ENCODE measurements at regions of chr13 and their contacts with region 1.

Region 1: DNA sequence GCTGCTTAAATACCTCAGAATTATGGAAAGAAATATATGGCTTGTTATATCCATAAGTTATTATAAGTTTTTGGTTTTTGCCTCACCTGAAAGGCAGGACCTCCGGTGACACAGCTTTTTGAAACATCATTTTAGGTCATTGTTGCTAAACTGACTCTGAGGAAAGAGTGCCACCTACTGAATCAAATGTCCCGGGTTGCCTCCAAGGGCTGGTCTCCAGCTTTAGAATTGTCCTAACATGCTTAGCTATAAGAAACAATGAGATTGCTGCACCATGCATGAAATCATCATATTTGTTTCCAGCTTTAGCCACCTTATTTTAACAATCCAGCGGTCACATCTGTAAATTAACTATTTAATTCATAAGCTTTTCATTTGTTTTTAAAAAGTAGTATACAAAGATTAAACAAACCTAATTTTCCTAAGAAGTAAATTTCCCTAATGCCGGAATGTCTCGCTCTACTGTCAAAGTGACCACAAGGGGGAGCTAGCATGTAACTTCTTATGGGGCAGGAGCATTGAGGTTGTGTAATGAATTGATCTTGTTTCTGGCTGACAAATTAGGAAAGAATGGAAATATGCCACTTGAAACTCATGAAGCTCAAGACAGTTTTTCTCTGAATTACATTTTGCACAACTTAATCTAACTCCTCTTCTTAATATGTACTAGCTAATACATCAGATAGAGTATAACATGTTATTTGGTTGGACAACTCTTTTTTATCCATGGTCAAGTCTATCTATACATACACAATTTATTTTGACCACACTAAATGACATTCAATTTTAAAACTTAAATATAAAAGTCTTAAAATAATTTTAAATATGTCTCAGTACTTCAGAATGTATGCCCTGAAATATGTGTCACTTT is 6.7 kb upstream of the PCDH17 start:
- H3K4me3 ChIP-seq: no peak overlapping the region
- H3K27ac ChIP-seq: no peak overlapping the region
- H3K4me1 ChIP-seq: no peaks in the 10 kb centered on the region
- CTCF ChIP-seq: no peak

Region 2: GRCh38 chr13:57582032-57582431 is 42.8 kb before region 1 on chr13:
- CTCF ChIA-PET with region 1: interaction called, 10 read pairs
- POLR2A ChIA-PET with region 1: no interaction called
- H3K4me3 ChIP-seq: no peak overlapping the region
- H3K27ac ChIP-seq: no peak overlapping the region
- H3K4me1 ChIP-seq: no peaks in the 10 kb centered on the region
- CTCF ChIP-seq: no peak

Region 3: GRCh38 chr13:57595775-57596174 is 29.0 kb before region 1 on chr13:
- CTCF ChIA-PET with region 1: no interaction called
- POLR2A ChIA-PET with region 1: no interaction called
- H3K4me3 ChIP-seq: no peak overlapping the region
- H3K27ac ChIP-seq: no peak overlapping the region
- H3K4me1 ChIP-seq: no peaks in the 10 kb centered on the region
- CTCF ChIP-seq: no peak

Region 4: DNA sequence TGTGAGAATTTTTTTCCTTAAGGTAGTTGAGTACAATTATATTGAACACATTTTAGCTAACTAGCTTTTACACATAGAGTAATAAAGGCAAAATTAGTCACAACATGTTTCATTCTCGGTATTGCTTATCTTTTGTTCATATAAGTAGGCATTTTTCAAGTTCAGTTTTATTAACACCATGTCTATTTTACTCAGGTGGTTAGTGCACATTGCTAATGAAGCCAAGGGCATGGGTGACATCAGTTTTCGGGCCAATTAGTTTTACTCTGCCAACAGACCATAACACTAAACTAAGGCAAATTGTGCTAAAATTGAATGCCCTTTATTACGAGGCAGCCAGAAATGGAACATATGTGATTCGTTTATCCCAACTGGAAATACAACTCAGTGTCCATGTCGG is 12.8 kb before region 1 on chr13:
- CTCF ChIA-PET with region 1: interaction called, 15 read pairs
- POLR2A ChIA-PET with region 1: interaction called, 3 read pairs
- H3K4me3 ChIP-seq: no peak overlapping the region
- H3K27ac ChIP-seq: no peak overlapping the region
- H3K4me1 ChIP-seq: no peaks in the 10 kb centered on the region
- CTCF ChIP-seq: no peak

Region 5: DNA sequence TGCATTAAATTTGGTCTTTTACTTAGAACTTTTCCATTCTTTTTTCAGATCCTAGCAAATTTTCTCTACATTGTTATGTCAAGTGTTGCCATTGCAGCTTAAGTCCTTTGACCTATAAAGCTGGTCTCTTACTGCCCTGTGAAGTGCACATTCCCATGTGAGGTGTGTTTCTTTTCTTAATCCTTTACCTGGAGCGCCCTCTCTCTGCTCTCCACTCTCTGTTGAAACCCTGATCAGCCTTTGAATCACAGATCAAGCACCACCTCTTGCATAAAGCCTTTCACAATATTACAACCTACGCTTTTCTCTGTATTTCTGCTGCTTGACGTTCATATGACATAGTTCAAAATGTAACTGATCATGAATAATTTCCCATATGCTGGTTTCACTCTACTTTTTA is 91.5 kb after region 1 on chr13:
- CTCF ChIA-PET with region 1: interaction called, 10 read pairs
- POLR2A ChIA-PET with region 1: no interaction called
- H3K4me3 ChIP-seq: no peak overlapping the region
- H3K27ac ChIP-seq: no peak overlapping the region
- H3K4me1 ChIP-seq: no peaks in the 10 kb centered on the region
- CTCF ChIP-seq: no peak

Region 6: GRCh38 chr13:57857945-57858344 is 233.1 kb after region 1 on chr13:
- CTCF ChIA-PET with region 1: interaction called, 10 read pairs
- POLR2A ChIA-PET with region 1: no interaction called
- H3K4me3 ChIP-seq: no peak overlapping the region
- H3K27ac ChIP-seq: no peak overlapping the region
- H3K4me1 ChIP-seq: no peaks in the 10 kb centered on the region
- CTCF ChIP-seq: no peak

Measured in HEK293 (cell line).